ENCODE measurements at regions of chr4 and their contacts with region 1.

Region 1: DNA sequence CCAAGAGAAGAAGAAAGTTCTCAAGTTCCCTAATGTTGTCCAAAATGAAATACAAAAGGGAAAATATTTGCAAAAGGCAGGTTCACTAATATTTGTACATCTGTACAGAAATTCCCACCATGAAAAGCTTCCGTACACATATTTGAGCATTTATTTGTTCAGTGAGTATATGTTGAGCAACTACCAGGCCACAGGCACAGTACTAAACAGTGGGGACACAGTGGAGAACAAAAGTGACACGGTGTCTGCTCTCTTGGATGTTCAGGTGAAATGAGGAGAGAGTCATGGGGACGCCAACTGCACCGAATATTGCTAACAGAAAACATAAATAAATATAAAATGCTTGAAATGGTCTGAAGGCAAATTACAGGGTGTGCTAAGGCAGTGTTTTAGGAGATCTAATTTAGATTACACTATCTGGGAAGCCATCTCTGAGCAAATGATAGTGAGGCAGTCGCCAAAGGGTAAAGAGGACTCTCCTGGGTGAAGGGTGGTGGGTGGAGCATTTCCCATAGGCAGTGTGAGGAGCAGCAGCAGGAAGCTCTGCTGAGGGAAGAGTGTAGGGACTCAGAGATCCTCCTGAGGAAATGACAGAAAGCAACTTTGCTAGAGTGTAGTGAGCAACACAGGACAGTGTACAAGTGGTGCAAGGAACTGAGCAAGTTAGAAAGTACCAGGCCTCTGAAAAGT is 375.2 kb downstream of the GALNTL6 start:
- DNase-seq: no peak
- H3K4me3 Mint-ChIP-seq: no peak overlapping the region
- H3K27ac Mint-ChIP-seq: no peak overlapping the region
- H3K4me1 Mint-ChIP-seq: no peaks in the 10 kb centered on the region
- H3K27me3 Mint-ChIP-seq: no peaks in the 10 kb centered on the region
- CTCF ChIP-seq: no peak

Region 2: DNA sequence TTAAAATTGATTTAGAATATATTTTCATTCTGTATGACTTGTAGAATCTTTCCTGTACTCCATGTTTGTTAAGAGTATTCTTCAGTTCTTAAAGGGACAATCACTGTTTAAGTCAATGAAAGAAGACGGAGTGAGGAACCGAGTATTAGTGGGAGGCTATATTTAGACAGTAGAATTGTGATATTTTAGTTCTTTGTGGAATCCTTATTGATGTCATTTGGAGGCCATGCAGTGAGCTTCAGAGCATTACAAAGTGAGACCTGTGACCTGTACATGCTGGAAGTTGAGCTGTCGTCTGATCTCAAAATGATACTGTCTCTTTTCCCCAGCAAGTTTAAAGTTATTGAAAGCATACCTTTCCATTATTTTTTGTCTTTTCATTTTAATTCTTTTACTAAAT is 19.5 kb after region 1 on chr4:
- CTCF ChIA-PET with region 1: no interaction called
- intact Hi-C with region 1: loop called (anchors 1 kb)
- DNase-seq: no peak
- H3K4me3 Mint-ChIP-seq: no peak overlapping the region
- H3K27ac Mint-ChIP-seq: no peak overlapping the region
- H3K4me1 Mint-ChIP-seq: no peaks in the 10 kb centered on the region
- H3K27me3 Mint-ChIP-seq: no peaks in the 10 kb centered on the region
- CTCF ChIP-seq: no peak

Region 3: DNA sequence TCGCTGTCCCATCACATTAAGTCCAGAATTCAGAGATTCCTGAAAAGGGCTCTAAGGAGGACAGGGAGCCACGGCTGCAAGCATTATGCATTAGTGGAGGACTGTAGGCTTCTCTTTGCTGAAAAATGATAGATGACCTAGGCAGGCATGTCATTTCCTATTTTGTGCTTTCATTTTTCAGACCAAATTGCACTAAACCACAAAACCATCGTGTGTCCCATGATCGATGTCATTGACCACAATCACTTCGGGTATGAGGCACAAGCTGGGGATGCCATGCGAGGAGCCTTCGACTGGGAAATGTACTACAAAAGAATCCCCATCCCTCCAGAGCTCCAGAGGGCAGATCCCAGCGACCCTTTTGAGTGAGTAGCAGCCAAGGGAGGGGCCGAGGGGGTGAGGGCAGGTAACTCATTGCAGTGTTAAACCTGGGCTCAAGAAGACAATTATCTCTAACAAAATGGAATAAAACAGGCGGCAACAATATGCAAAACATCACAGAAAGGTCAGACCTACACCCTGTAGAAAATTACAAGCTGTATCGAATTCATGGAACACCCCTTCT is 625.0 kb after region 1 on chr4:
- CTCF ChIA-PET with region 1: no interaction called
- intact Hi-C with region 1: no loop called
- DNase-seq: no peak
- H3K4me3 Mint-ChIP-seq: no peak overlapping the region
- H3K27ac Mint-ChIP-seq: no peak overlapping the region
- H3K4me1 Mint-ChIP-seq: no peaks in the 10 kb centered on the region
- H3K27me3 Mint-ChIP-seq: no peaks in the 10 kb centered on the region
- CTCF ChIP-seq: no peak